Mammary epithelial cell (primary cell): ENCODE measurements at regions of chr14 and their contacts with region 1.

Region 1: GRCh38 chr14:61025251-61026223 is 44.5 kb downstream of the SLC38A6 start:
- DNase-seq: peak; percentile 55
- H3K4me3 ChIP-seq: no peak overlapping the region
- H3K27ac ChIP-seq: no peak overlapping the region
- H3K4me1 ChIP-seq: peaks cover 2% of the 10 kb centered on the region
- H3K27me3 ChIP-seq: no peaks in the 10 kb centered on the region
- CTCF ChIP-seq: peak; percentile 84 to 90

Region 2: DNA sequence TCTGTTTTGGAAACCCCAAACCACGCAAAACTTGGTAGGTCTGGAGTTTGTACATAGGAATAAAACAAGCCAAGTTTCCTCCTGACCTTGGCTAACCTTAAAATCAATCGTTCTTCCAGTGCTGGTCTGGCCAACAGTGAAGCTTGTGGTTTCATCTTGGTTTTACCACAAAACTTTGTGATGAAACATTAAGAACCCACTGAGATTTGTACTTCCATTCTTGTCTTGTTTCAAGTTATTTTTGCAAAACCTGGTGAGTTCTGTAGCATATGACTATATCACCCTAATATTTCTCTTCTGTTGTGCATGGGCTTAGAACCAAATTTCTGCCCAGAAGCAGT is 402.6 kb before region 1 on chr14:
- CTCF ChIA-PET with region 1: interaction called, 3 read pairs
- dilution Hi-C with region 1: no loop called
- in situ Hi-C with region 1: loop called in 1 of 2 experiments (anchors 10 kb)
- intact Hi-C with region 1: loop called (anchors 1 kb)
- DNase-seq: no peak
- H3K4me3 ChIP-seq: no peak overlapping the region
- H3K27ac ChIP-seq: no peak overlapping the region
- H3K4me1 ChIP-seq: no peaks in the 10 kb centered on the region
- H3K27me3 ChIP-seq: no peaks in the 10 kb centered on the region
- CTCF ChIP-seq: no peak

Region 3: GRCh38 chr14:60656686-60657455 is 368.7 kb before region 1 on chr14:
- CTCF ChIA-PET with region 1: interaction called, 7 read pairs
- dilution Hi-C with region 1: no loop called
- in situ Hi-C with region 1: no loop called
- intact Hi-C with region 1: loop called (anchors 1 kb)
- DNase-seq: peak; percentile 68
- H3K4me3 ChIP-seq: peak overlapping the region; percentile 57 to 76 (median 72)
- H3K27ac ChIP-seq: no peak overlapping the region
- H3K4me1 ChIP-seq: peaks cover 20% of the 10 kb centered on the region
- H3K27me3 ChIP-seq: peaks cover 18% of the 10 kb centered on the region
- CTCF ChIP-seq: peak in 1 of 2 donors; percentile 58

Region 4: GRCh38 chr14:60724137-60724619 is 301.4 kb before region 1 on chr14 and contains the start of gene SIX4:
- CTCF ChIA-PET with region 1: no interaction called
- dilution Hi-C with region 1: no loop called
- in situ Hi-C with region 1: loop called in 1 of 2 experiments (anchors 10 kb)
- intact Hi-C with region 1: loop called (anchors 2 kb)
- DNase-seq: peak; percentile 92
- H3K4me3 ChIP-seq: peak within 1 kb of the TSS; percentile 52 to 92 (median 71)
- H3K27ac ChIP-seq: peak within 1 kb of the TSS; percentile 66
- H3K4me1 ChIP-seq: peaks cover 5% of the 10 kb centered on the region
- H3K27me3 ChIP-seq: no peaks in the 10 kb centered on the region
- CTCF ChIP-seq: no peak
- total RNA-seq, gene SIX4: 10.7 to 13.2 TPM

Region 5: GRCh38 chr14:60980811-60981632 is 44.5 kb before region 1 on chr14 and contains the starts of genes SLC38A6 and TRMT5:
- CTCF ChIA-PET with region 1: no interaction called
- dilution Hi-C with region 1: no loop called
- in situ Hi-C with region 1: no loop called
- intact Hi-C with region 1: loop called (anchors 2 kb)
- DNase-seq: peak; percentile 95
- H3K4me3 ChIP-seq: peak within 1 kb of the TSS; percentile 65 to 97 (median 90)
- H3K27ac ChIP-seq: peak within 1 kb of the TSS; percentile 99
- H3K4me1 ChIP-seq: peaks cover 28% of the 10 kb centered on the region
- H3K27me3 ChIP-seq: no peaks in the 10 kb centered on the region
- CTCF ChIP-seq: no peak
- total RNA-seq, gene SLC38A6: 15.2 to 46.5 TPM
- total RNA-seq, gene TRMT5: 15.3 to 18.6 TPM

Region 6: GRCh38 chr14:61188978-61189808 is 163.7 kb after region 1 on chr14:
- CTCF ChIA-PET with region 1: no interaction called
- dilution Hi-C with region 1: no loop called
- in situ Hi-C with region 1: loop called in 1 of 2 experiments (anchors 25 kb)
- intact Hi-C with region 1: no loop called
- DNase-seq: no peak
- H3K4me3 ChIP-seq: peak overlapping the region in 2 of 3 experiments; percentile 25 to 29
- H3K27ac ChIP-seq: peak overlapping the region; percentile 46
- H3K4me1 ChIP-seq: peaks cover 11% of the 10 kb centered on the region
- H3K27me3 ChIP-seq: no peaks in the 10 kb centered on the region
- CTCF ChIP-seq: peak; percentile 47 to 78

Region 7: DNA sequence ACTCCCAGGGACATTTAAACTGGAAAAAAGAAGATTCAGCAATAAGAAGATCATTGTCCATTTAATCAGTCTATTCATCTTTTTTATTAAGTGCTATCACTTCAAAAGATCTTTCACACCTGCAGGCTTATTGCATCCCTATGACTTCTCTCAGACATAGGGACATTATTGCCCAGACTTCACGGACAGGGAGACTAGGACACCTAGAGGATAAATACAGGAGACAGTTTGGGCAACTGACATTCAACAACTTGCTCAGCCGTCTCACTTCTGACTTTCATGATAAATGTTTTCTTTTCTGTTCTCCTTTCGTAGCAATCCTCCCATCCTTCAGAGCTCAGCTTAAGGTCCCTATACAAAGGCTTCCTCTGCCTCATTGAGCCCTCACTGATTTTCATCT is 171.3 kb after region 1 on chr14:
- CTCF ChIA-PET with region 1: no interaction called
- dilution Hi-C with region 1: no loop called
- in situ Hi-C with region 1: loop called in 1 of 2 experiments (anchors 25 kb)
- intact Hi-C with region 1: loop called (anchors 1 kb)
- DNase-seq: peak; percentile 25
- H3K4me3 ChIP-seq: no peak overlapping the region
- H3K27ac ChIP-seq: no peak overlapping the region
- H3K4me1 ChIP-seq: no peaks in the 10 kb centered on the region
- H3K27me3 ChIP-seq: no peaks in the 10 kb centered on the region
- CTCF ChIP-seq: peak; percentile 49 to 67